Heart right ventricle (tissue), 16 donors: ENCODE measurements at regions of chr10 and their contacts with region 1.

Region 1: DNA sequence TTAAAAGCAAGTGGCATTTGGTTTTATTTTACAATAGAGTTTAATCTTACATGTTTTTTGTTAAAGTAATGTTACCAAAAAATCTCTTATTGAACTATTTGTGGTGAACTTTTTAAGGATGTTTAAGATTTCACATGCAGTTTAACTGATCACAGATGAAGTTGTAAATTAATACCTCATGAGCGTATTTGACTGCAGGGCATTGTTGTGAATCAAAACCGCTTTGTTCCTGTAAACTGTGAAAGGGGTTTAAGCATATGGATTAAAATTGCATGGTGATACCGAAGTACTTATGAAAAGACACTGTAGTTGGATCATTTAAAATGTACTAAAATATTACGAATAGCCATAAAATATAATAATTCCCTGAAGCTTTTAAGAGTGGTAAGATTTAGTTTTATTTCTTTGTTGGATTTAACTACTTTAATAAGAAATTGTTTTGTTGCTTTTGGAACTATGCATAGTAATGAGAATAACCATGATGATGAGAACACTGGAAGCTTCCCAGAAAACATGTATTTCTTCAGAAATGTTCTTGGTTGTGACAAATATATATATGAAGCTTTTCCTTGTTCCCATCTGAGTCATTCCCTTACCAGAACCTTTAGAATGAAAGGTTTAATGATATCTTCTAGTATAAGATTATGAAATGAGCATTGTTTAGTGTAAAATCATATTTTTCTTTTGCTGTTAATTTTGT is 131.3 kb downstream of the ADK start:
- DNase-seq: no peak
- ATAC-seq: no peak
- H3K4me3 ChIP-seq: no peak overlapping the region
- H3K27ac ChIP-seq: no peak overlapping the region
- H3K4me1 ChIP-seq: peaks cover 0 to 6% (median 0%) of the 10 kb centered on the region in 9 donors
- H3K27me3 ChIP-seq: no peaks in the 10 kb centered on the region
- CTCF ChIP-seq: no peak

Region 2: GRCh38 chr10:73956476-73957359 is 325.6 kb before region 1 on chr10:
- intact Hi-C with region 1: no loop called
- DNase-seq: no peak
- ATAC-seq: peak; percentile 53 to 78 (median 70)
- H3K4me3 ChIP-seq: no peak overlapping the region
- H3K27ac ChIP-seq: peak overlapping the region in 9 of 10 donors; percentile 21 to 74 (median 61)
- H3K4me1 ChIP-seq: peaks cover 5 to 60% (median 11%) of the 10 kb centered on the region in 9 donors
- H3K27me3 ChIP-seq: no peaks in the 10 kb centered on the region
- CTCF ChIP-seq: no peak

Region 3: GRCh38 chr10:74384615-74385183 is 102.4 kb after region 1 on chr10:
- intact Hi-C with region 1: loop called in 1 of 10 experiments (anchors 5 kb)
- DNase-seq: no peak
- ATAC-seq: no peak
- H3K4me3 ChIP-seq: no peak overlapping the region
- H3K27ac ChIP-seq: no peak overlapping the region
- H3K4me1 ChIP-seq: no peaks in the 10 kb centered on the region
- H3K27me3 ChIP-seq: no peaks in the 10 kb centered on the region
- CTCF ChIP-seq: no peak